ENCODE measurements at regions of chr17 and their contacts with region 1.

Region 1: DNA sequence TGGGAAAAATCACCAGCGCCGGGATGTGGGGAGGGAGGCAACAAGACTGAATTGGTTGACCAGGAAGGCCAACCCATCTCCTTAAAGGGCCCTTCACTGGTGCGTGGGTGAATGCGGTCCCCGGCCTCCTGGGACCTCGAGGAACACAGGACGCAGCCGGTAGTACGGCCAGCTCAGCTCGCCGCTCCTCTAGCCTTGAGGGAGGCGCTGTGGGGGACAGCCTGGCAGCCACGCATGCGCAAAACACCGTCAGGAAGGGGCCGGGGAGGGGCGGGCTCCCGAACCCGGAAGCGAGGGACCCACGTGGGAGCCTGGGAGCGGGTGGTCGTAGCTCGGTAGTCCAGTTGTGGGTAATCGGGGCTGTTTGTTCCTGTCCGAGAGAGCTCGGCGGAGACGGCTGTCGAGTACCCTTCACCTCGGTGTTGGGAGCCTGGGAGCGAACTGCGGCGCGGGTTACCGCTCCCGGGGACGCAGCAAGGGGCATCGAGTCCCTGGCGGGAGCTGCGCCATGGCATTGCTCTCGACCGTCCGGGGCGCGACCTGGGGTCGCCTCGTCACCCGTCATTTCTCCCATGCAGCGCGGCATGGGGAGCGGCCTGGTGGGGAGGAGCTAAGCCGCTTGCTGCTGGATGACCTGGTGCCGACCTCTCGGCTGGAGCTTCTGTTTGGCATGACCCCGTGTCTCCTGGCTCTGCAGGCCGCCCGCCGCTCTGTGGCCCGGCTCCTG is at the start of gene MRM1:
- DNase-seq: peak; percentile 93
- ATAC-seq: peak; percentile 86
- H3K4me3 Mint-ChIP-seq: peak within 1 kb of the TSS; percentile 89
- H3K27ac Mint-ChIP-seq: peak within 1 kb of the TSS; percentile 92
- H3K4me1 Mint-ChIP-seq: peaks cover 33% of the 10 kb centered on the region
- H3K27me3 Mint-ChIP-seq: no peaks in the 10 kb centered on the region
- total RNA-seq, gene MRM1: 14.3 to 16.4 TPM

Region 2: DNA sequence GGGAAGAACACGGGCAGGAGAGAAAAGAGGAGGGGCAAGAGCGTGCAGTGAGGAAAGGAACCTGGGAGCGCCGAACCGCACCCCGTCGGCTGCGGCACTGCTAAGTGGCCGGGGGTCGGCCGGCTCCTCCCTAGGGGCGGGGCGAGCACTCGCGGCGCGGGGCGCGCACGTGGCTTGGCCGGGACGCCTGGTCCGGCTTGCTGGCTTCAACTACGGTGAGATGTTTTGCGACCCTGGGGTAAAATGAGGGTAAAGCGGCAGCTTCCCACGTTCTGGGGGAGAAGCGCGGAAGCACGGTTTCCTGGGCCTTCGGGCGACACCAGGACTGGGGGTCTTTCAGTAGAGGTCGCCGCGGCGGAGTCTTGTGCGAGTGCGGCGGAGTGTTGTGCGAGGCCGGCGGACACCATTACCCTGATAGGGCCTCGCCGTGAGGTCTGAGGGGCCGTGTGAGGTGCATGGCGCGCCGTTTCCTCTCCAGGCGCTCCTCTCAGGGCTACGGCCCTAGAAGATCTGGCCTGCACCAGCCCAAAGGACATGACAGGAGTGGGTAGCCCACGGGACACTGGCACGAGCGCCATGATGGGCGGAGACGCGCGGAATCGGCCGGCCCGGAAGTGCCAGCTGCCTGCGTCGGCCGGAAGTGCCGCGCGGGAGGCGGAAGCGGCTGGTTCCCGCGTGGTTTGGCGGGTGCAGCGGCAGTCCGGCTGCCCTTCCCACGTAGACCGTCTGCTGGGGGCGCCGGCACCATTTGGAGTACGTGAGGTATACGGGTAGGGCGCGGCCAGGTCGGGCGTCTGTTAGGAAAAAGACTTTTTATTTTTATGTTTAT is 66.4 kb before region 1 on chr17 and contains the starts of genes MYO19 and PIGW:
- CTCF ChIA-PET with region 1: interaction called, 8 read pairs
- POLR2A ChIA-PET with region 1: interaction called, 11 read pairs
- intact Hi-C with region 1: loop called in 1 of 2 experiments (anchors 1 kb)
- DNase-seq: peak; percentile 91
- ATAC-seq: peak; percentile 84
- H3K4me3 Mint-ChIP-seq: peak within 1 kb of the TSS; percentile 98
- H3K27ac Mint-ChIP-seq: peak within 1 kb of the TSS; percentile 99
- H3K4me1 Mint-ChIP-seq: peaks cover 39% of the 10 kb centered on the region
- H3K27me3 Mint-ChIP-seq: no peaks in the 10 kb centered on the region
- total RNA-seq, gene MYO19: 110 to 127 TPM
- total RNA-seq, gene PIGW: 11.8 to 13.4 TPM

Region 3: GRCh38 chr17:36629252-36629847 is 27.9 kb after region 1 on chr17:
- CTCF ChIA-PET with region 1: interaction called, 19 read pairs
- POLR2A ChIA-PET with region 1: no interaction called
- intact Hi-C with region 1: no loop called
- DNase-seq: peak; percentile 87
- ATAC-seq: peak; percentile 92
- H3K4me3 Mint-ChIP-seq: no peak overlapping the region
- H3K27ac Mint-ChIP-seq: no peak overlapping the region
- H3K4me1 Mint-ChIP-seq: no peaks in the 10 kb centered on the region
- H3K27me3 Mint-ChIP-seq: peaks cover 4% of the 10 kb centered on the region

Region 4: GRCh38 chr17:36722121-36722902 is 120.8 kb after region 1 on chr17:
- CTCF ChIA-PET with region 1: interaction called, 4 read pairs
- POLR2A ChIA-PET with region 1: interaction called, 4 read pairs
- intact Hi-C with region 1: loop called in 1 of 2 experiments (anchors 1 kb)
- DNase-seq: peak; percentile 91
- ATAC-seq: peak; percentile 94
- H3K4me3 Mint-ChIP-seq: peak overlapping the region; percentile 76
- H3K27ac Mint-ChIP-seq: peak overlapping the region; percentile 98
- H3K4me1 Mint-ChIP-seq: peaks cover 46% of the 10 kb centered on the region
- H3K27me3 Mint-ChIP-seq: no peaks in the 10 kb centered on the region

Region 5: DNA sequence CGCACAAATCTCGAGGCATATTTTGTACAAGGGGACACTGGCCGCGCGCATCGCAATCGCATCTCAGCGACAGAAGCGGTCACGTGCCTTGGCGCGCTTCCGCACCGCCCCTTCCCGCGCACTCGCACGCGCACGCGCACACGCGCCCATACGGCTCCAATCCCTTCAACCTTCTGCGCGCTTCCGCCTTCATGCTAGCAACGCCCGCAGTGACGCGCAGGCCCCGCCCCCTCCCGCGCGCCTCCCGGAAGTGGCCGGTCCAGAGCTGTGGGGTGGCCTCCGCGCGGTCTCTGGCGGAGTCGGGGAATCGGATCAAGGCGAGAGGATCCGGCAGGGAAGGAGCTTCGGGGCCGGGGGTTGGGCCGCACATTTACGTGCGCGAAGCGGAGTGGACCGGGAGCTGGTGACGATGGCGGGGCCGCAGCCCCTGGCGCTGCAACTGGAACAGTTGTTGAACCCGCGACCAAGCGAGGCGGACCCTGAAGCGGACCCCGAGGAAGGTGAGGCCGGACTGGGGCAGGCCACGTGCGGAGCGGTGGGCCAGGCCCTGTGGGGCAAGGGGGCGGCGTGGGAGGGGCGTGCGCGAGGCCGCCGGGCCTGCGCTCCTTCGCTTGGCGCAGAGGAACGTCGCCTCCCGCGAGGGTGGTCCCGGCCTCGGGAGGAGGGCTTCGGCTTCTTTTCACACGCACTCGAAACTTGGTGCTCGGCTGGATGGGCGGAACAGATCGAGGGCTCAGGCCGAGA is 347.4 kb after region 1 on chr17 and contains the start of gene AATF:
- CTCF ChIA-PET with region 1: no interaction called
- POLR2A ChIA-PET with region 1: no interaction called
- intact Hi-C with region 1: loop called in 1 of 2 experiments (anchors 1 kb)
- DNase-seq: peak; percentile 97
- ATAC-seq: peak; percentile 99
- H3K4me3 Mint-ChIP-seq: peak within 1 kb of the TSS; percentile 90
- H3K27ac Mint-ChIP-seq: peak within 1 kb of the TSS; percentile 94
- H3K4me1 Mint-ChIP-seq: peaks cover 47% of the 10 kb centered on the region
- H3K27me3 Mint-ChIP-seq: peaks cover 28% of the 10 kb centered on the region
- total RNA-seq, gene AATF: 87.9 to 149 TPM

Region 6: DNA sequence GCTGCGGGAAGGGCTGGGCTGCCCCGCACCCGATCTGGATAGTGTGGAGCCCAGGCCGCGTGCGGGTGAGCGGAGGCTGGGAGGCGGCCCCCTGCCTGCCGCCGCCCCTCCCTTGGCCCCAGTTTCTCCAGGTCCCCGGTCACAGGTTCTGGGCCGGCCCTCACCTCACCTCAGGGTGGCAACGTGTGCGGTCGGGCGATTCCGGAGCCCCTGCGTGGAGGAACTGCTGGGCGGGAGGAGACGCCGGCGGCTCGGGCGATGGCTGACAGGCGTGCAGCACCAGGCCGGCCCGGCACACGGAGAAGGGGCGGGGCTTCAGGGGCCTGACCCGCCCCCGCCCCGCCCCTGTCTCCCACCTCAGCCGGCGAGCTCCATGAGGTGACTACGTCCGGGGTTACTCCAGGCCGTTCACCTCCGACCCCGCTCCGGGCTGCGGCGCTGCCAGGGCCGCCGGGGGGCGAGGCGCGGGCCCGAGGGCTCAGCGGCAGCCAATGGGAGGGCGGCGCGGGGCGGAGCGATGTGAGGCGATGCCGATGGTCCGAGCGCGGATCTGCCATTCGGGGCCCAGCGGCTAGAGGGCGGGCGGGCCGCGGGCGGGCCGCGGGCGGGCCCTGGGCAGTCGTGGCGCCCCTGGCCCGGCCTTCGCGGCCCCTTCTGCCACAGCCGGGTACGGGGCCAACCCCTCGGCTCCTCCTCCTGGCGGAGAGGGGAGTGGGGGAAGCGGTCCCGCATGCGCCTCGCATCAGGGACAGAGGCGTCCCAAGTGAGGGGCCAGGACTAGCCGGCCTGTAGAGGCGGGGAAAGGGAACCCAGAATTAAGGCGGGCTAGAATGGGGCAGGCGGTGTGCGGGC is 757.6 kb after region 1 on chr17:
- CTCF ChIA-PET with region 1: no interaction called
- POLR2A ChIA-PET with region 1: no interaction called
- intact Hi-C with region 1: loop called in 1 of 2 experiments (anchors 1 kb)
- DNase-seq: peak; percentile 96
- ATAC-seq: peak; percentile 98
- H3K4me3 Mint-ChIP-seq: peak overlapping the region; percentile 88
- H3K27ac Mint-ChIP-seq: peak overlapping the region; percentile 83
- H3K4me1 Mint-ChIP-seq: peaks cover 23% of the 10 kb centered on the region
- H3K27me3 Mint-ChIP-seq: no peaks in the 10 kb centered on the region